PC-9 (cell line): ENCODE measurements at regions of chr19 and their contacts with region 1.

Region 1: DNA sequence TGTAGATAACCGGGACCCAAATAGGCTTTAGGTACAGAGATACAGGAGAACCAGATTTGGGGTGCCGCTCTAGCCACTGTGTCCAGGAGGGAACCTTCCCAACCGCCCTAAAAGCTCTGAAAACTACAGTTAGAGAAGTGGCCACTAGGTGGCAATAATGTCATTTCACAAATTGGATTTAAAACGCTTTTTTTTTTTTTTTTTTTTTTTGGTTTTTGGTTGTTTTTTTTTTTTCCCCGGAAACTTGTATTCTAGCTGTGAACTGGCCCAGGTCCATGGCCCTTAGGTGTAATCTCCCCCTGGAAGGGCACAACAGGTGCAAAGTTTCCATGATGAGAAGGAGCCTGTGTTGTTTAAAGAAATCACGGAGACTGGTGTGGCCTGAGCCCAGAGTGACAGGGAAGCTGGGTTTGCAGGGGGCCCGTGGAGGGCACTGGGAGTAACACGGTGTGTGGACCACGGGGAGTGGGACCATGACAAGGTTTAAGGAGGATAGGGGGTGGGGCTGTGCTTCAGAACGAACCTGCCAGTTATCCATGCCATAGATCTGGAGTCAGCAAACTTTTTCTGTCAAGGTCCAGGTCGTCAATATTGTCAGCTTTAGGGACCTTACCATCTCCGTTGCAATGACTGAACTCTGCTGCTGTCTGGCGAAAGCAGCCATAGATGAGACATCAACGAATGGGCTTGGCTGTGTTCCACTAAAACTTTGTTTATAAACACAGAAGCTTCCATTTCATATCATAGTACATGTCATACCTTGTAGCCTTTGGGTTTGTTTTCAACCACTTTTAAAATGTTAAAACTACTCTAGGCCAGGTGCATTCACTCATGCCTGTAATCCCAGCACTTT is 10.1 kb downstream of the OR1I1 start:
- DNase-seq: peak; percentile 38 to 74
- H3K4me3 ChIP-seq: no peak overlapping the region
- H3K27ac ChIP-seq: no peak overlapping the region
- H3K4me1 ChIP-seq: peaks cover 18% of the 10 kb centered on the region
- H3K27me3 ChIP-seq: no peaks in the 10 kb centered on the region
- CTCF ChIP-seq: peak; percentile 88

Region 2: GRCh38 chr19:14761612-14762011 is 330.5 kb before region 1 on chr19:
- CTCF ChIA-PET with region 1: no interaction called
- POLR2A ChIA-PET with region 1: no interaction called
- intact Hi-C with region 1: no loop called
- DNase-seq: no peak
- H3K4me3 ChIP-seq: no peak overlapping the region
- H3K27ac ChIP-seq: no peak overlapping the region
- H3K4me1 ChIP-seq: no peaks in the 10 kb centered on the region
- H3K27me3 ChIP-seq: no peaks in the 10 kb centered on the region
- CTCF ChIP-seq: no peak

Region 3: GRCh38 chr19:15022752-15023151 is 69.4 kb before region 1 on chr19:
- CTCF ChIA-PET with region 1: interaction called, 10 read pairs
- POLR2A ChIA-PET with region 1: no interaction called
- intact Hi-C with region 1: no loop called
- DNase-seq: no peak
- H3K4me3 ChIP-seq: no peak overlapping the region
- H3K27ac ChIP-seq: no peak overlapping the region
- H3K4me1 ChIP-seq: 0 out of 2 replicates have a peak, but pooled peaks cover 5% of the 10 kb centered on the region
- H3K27me3 ChIP-seq: no peaks in the 10 kb centered on the region
- CTCF ChIP-seq: no peak

Region 4: DNA sequence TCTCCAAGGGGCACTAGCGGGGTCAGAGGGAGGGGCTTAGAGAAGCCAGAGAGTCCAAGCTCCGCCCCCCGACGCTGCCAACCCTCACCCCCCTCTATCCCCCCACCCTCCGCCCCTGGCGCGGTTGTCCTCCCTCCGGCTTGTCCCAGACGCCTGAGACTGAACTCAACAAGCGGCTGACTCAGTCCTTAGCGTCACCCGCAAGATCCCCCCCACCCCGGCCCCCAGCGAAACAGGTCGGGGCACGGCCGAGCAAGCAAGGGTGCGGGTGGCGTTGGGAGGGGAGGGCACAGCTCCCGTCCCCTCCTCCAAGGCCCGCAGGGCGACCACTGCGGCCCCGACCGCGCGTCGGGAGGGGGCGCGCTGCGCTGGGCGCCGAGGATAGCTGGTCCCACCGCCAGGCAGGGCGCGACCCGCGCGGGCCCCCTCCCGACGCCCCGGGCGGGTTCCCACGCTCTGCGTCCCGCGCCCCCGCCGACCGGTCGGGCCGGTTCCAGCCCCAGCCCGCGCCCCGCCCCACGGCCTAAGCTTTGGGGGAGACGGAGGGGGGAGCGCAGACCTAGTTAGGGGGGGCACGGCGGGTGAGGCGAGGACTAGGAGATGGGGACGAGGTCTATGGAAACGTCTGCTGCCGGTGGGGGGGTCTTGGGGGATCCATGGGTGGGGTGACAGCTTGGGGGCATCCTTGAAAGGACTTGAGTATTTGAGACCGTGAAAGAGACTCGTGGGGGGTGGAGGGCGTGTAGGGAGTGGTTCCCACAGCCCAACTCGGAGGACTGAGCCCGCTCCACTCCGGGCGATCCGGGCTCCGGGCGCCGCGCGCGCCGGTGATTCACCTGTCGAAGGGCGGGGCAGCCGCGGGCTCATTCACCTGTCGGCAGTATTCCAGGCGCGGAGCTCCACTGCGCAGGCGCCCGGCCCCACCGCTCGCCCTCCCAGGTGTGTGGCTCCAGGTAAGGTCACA is 103.5 kb after region 1 on chr19:
- CTCF ChIA-PET with region 1: no interaction called
- POLR2A ChIA-PET with region 1: interaction called, 27 read pairs
- intact Hi-C with region 1: no loop called
- DNase-seq: peak; percentile 92 to 98
- H3K4me3 ChIP-seq: peak overlapping the region; percentile 57
- H3K27ac ChIP-seq: peak overlapping the region; percentile 82
- H3K4me1 ChIP-seq: peaks cover 43% of the 10 kb centered on the region
- H3K27me3 ChIP-seq: no peaks in the 10 kb centered on the region
- CTCF ChIP-seq: peak; percentile 35; the same call in 1 of the 2 replicates

Region 5: DNA sequence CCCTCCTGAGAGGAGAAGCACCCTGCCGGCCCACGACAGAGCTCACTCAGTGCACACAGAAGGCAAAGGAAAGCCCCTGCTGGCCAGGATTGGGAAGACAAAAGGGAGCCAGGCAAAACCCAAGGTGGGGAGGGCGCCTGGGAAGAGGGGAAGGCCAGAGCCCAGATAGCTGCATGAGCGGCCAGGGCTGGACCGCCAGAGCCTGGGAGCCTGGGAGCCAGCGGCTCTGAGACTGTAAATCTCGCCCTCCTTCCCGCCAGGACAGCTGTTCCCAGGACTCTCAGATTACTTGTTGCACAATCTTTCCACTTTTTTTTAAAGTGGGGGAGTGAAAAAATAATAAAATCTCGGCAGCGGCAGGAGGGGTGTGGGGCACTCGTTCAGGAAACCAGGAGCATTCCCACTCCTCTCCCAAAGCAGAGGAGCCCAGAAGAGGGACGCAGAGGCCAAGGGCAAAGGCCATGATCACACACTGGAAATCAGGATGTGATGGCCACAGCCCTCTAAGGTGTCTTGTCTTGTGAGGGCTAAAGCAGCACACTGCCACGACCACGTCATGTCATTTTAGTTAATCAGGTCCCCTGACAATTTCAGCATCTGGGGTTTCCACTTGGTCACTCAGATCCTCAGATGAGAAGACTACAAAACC is 159.7 kb after region 1 on chr19:
- CTCF ChIA-PET with region 1: interaction called, 12 read pairs
- POLR2A ChIA-PET with region 1: interaction called, 38 read pairs
- intact Hi-C with region 1: no loop called
- DNase-seq: peak; percentile 72 to 78
- H3K4me3 ChIP-seq: no peak overlapping the region
- H3K27ac ChIP-seq: peak overlapping the region; percentile 62
- H3K4me1 ChIP-seq: peaks cover 39% of the 10 kb centered on the region
- H3K27me3 ChIP-seq: no peaks in the 10 kb centered on the region
- CTCF ChIP-seq: no peak; the same call in none of the 2 replicates

Region 6: DNA sequence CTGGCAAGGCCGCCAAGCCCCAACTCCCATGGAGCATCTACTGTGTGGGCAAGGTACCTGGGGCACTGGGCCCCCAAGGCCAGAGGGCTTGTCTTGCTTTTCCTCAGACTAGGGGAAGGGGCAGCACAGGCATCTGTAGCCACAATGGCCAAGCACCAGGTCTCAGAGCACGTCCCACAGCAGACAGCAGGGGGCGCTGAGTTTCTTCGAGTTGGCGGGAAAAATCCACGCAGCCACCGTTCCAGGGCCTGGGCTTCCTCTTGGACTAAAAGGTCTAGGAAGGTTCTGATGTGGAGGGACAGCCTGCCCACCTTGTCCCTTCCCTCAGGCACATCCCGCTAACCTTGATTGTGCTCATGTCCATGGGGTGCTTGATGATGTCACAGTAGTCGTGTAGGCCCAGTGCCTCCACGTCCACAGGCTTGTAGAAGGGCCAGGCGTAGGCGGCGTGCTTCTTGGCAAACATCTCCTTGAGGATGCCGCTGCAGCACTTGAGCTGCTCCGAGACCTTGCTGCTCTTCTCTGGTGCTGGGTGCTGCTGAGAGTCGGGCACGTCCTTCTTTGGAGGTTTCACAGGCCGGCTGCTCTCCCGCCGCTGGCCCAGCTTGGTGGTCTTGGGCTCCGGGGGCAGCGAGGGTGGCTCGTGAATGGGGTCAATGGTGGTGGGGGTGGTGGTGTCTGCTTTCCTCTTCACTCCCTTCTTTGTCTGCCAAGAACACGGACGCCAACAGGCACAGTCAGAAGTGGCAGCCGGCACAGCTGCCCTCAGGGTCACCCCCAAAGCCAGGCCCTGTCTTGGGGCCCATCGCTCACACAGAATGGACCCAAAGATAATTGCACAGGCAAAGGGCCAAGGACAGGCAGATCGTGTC is 172.2 kb after region 1 on chr19:
- CTCF ChIA-PET with region 1: no interaction called
- POLR2A ChIA-PET with region 1: no interaction called
- intact Hi-C with region 1: no loop called
- DNase-seq: peak in 1 of 2 experiments; percentile 50
- H3K4me3 ChIP-seq: no peak overlapping the region
- H3K27ac ChIP-seq: no peak overlapping the region
- H3K4me1 ChIP-seq: no peaks in the 10 kb centered on the region
- H3K27me3 ChIP-seq: no peaks in the 10 kb centered on the region
- CTCF ChIP-seq: peak; percentile 86

Region 7: GRCh38 chr19:16111160-16111908 is 1019.2 kb after region 1 on chr19 and contains the start of gene RAB8A:
- CTCF ChIA-PET with region 1: interaction called, 19 read pairs
- POLR2A ChIA-PET with region 1: no interaction called
- intact Hi-C with region 1: no loop called
- DNase-seq: peak; percentile 97 to 99
- H3K4me3 ChIP-seq: peak within 1 kb of the TSS; percentile 97
- H3K27ac ChIP-seq: peak within 1 kb of the TSS; percentile 72
- H3K4me1 ChIP-seq: peaks cover 12% of the 10 kb centered on the region
- H3K27me3 ChIP-seq: no peaks in the 10 kb centered on the region
- CTCF ChIP-seq: peak; percentile 92
- total RNA-seq, gene RAB8A: 87.9 and 104 TPM in 2 replicates